ENCODE measurements at regions of chr20 and their contacts with region 1.

Region 1: DNA sequence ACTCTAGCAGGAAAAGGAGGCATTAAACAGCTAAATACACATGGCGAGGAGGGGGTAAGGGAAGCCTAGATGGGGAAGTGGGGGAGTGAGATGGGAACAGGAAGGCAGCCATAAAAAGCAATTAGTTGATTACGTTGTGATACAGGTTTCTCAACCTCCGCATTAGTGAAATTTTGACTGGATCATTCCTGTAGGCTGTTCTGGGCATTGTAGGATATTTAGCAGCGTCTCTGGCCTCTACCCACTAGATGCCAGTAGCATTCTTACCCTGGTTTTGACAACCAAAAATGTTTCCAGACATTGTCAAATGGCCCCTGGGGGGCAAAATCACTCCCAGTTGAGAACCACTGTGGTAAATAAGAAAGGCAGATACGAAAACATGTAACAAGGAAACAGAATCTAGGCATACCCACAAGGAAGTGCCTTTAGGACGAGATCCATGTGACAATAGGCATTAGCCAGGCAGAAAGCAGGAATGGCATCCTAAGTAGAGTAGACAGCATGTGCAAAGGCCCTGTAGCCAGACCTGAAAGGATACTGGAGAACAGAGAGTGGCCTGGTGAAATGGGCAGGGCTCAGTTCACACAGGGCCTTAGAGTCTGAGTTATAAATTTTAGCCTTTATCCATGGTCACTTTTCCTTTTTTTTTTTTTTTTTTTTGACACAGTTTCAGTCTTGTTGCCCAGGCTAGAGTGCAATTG is 25.8 kb upstream of the PTPN1 start:
- DNase-seq: no peak
- ATAC-seq: peak; percentile 40; the same call in 1 of the 2 replicates
- H3K4me3 ChIP-seq: no peak overlapping the region; a peak in 2 of 4 replicates
- H3K27ac ChIP-seq: peak overlapping the region; percentile 90
- H3K4me1 ChIP-seq: no peaks in the 10 kb centered on the region
- H3K27me3 ChIP-seq: no peaks in the 10 kb centered on the region
- CTCF ChIP-seq: peak; percentile 52; the same call in 1 of the 2 replicates

Region 2: DNA sequence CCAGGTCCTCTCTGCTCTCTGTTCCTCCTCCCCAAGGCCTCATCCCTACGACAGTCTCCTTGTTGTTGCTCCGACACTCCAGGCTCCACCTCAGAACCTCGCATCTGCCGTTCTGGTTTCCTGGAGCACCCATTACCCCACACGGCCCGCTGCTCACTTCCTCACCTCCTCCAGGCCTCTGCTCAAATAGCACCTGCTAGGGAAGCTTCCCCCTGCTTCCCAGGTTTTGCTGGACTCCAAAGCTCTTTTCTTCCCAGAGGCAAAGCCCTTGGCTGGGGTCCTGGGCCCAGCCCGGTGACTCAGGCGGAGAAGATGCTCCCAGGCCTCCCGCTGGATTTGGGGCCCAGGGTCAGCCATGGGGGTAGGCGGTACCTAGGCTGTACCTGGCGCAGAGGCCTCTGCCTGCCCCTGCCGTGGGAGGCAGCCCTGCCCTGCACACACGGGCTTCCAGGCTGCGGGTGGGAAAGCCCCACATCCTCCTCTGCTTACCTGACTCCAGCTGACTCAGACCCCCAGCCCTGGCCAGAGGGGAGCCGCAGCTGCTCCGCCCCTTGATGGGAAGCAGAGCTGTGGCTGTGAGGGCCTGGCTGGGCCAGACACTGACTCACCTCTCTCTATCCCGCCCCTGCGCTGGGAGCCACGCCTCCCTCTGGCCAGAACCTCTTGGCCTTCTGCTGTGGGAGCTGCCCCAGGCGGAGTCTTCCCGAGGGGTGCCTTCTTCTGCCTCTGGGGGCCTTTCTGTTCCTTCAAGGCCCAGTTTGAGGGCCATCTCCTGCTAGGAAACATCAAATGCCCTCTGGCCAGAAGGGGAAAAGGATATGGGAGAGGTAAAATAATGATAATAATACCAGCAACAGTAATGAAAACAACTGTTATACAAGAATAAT is 163.3 kb before region 1 on chr20:
- CTCF ChIA-PET with region 1: no interaction called
- POLR2A ChIA-PET with region 1: no interaction called
- in situ Hi-C with region 1: loop called (anchors 10 kb)
- intact Hi-C with region 1: no loop called
- DNase-seq: no peak
- ATAC-seq: peak; percentile 88
- H3K4me3 ChIP-seq: peak overlapping the region in 1 of 2 experiments; percentile 3; a peak in 1 of 4 replicates
- H3K27ac ChIP-seq: no peak overlapping the region; the same call in 1 of the 2 replicates
- H3K4me1 ChIP-seq: peaks cover 7% of the 10 kb centered on the region
- H3K27me3 ChIP-seq: no peaks in the 10 kb centered on the region
- CTCF ChIP-seq: no peak

Region 3: GRCh38 chr20:50569864-50570836 is 85.7 kb after region 1 on chr20:
- CTCF ChIA-PET with region 1: no interaction called
- POLR2A ChIA-PET with region 1: no interaction called
- in situ Hi-C with region 1: no loop called
- intact Hi-C with region 1: loop called (anchors 5 kb)
- DNase-seq: no peak
- ATAC-seq: peak; percentile 84
- H3K4me3 ChIP-seq: no peak overlapping the region
- H3K27ac ChIP-seq: no peak overlapping the region
- H3K4me1 ChIP-seq: peaks cover 17% of the 10 kb centered on the region
- H3K27me3 ChIP-seq: no peaks in the 10 kb centered on the region
- CTCF ChIP-seq: no peak; the same call in 1 of the 2 replicates

Measured in Panc1 (cell line).